ENCODE measurements at regions of chr12 and their contacts with region 1.

Region 1: GRCh38 chr12:52372216-52373154 is 5.2 kb upstream of the KRT85 start:
- DNase-seq: peak; percentile 81

Region 2: DNA sequence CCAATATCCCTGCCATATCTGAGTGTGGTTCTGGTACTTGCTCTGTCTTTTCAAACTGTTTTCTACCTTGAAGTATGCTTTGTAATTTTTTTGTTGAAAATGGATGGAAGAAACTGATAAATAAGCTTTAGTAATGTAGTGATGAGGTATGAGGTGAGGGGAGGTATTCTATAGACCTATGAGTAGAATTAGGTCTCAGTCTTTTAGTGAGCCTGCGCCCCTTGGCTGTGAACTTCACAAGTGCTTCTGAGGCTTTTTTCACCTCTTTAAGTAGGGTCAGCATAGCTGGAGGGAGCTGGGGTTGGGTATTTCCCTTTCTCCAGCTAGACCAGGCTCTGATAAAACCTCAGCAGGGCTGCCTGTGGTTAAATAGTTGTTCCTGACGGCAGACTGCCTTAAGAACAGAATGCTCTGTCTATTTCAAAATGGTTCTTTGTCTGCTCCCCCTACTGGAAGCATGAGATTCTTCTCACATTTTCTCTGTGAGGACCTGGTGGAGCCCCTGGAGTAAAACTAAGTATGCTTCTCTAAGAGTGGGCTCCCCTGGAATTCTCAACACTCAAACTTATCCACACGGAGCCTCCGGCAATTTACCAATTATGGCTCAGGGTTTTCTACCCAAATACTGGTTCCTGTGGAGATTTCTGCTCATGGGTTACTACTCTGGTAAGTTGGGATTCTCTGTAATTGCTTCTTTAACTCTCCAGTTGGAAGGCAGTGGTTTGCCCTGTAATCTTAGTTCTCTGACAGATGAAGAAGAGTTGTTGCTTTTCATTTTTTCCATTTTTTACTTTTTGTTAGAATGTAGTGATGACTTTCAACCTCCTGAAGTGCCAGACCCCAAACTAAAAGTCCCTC is 134.6 kb after region 1 on chr12:
- intact Hi-C with region 1: loop called (anchors 2 kb)
- DNase-seq: peak; percentile 38

Region 3: GRCh38 chr12:52879394-52880351 is 507.2 kb after region 1 on chr12:
- intact Hi-C with region 1: loop called (anchors 1 kb)
- DNase-seq: peak; percentile 86

Region 4: DNA sequence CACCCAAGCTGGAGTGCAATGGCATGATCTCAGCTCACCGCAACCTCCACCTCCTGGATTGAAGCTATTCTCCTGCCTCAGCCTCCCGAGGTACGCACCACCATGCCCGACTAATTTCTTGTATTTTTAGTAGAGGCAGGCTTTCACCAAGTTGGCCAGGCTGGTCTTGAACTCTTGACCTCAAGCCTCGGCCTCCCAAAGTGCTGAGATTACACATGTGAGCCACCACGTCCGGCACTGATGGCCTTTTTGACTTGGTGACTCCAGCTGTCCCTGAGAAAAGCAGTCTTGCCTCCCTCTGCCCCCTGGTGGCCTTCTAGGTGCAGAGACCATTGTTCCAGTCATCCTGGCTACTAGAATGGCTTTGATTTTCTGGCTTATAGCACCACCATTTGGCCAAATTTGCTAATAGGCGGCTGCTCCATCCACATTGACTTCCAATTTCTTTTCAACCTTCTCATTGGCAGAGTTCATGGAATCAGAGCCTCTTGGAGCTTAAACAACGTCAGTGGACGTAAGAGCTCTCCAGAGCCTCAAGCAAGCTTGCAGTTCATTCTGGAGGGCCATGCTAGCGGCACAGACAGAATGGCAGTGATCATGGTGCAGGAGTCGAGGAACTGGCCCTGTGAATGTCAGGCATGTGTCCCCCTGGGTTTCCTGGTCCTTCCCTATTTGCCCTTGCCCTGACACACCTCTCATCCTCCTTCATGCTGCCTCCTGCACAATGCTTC is 608.4 kb after region 1 on chr12:
- intact Hi-C with region 1: loop called (anchors 10 kb)
- DNase-seq: peak; percentile 88